ENCODE measurements at regions of chr10 and their contacts with region 1.

Region 1: DNA sequence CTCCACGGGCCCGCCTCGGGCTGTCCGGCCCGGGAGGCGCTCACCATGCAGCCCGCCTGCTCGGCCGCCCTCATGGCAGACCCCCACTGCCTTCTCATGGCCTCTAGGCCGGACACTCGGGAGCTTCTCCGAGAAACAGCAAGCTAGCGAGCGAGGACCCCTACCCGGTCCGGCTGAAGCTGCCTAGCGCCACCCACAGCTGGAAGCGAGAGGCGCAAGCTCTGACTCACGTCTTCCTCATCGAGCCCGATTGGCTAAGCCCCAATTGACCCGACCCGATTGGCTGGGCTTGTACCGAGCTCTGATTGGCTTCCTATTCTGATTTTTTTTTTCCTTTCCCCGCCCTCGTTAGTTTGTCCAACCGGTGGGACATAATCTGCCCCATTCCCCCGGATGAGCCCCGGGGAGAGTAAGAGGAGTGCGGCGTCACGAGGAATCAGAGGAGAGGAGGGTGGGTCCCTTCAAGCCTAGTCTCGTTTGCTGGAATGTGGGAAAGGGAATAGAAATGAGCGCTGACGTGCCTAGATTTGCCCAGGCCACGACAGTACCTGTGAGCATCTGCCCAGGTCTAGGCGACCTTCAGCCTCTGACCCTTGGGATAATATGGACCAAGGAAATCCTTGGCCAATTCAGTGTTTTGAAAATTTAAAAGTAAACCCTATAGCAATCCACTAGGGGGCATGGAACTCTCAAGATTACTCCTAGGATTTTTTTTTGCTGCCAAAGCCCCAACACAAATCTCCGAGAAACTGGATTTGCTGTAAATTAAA is at the start of gene TYSND1:
- H3K4me3 ChIP-seq: peak within 1 kb of the TSS; percentile 64
- H3K27ac ChIP-seq: peak within 1 kb of the TSS; percentile 84
- H3K4me1 ChIP-seq: peaks cover 6% of the 10 kb centered on the region; the same call in 1 of the 2 replicates
- CTCF ChIP-seq: peak; percentile 95

Region 2: GRCh38 chr10:68156373-68157185 is 1990.1 kb before region 1 on chr10:
- CTCF ChIA-PET with region 1: no interaction called
- POLR2A ChIA-PET with region 1: no interaction called
- H3K4me3 ChIP-seq: no peak overlapping the region
- H3K27ac ChIP-seq: no peak overlapping the region
- H3K4me1 ChIP-seq: 0 out of 2 replicates have a peak, but pooled peaks cover 11% of the 10 kb centered on the region
- CTCF ChIP-seq: peak; percentile 62

Region 3: GRCh38 chr10:69337296-69338132 is 809.2 kb before region 1 on chr10:
- CTCF ChIA-PET with region 1: no interaction called
- POLR2A ChIA-PET with region 1: no interaction called
- H3K4me3 ChIP-seq: no peak overlapping the region
- H3K27ac ChIP-seq: peak overlapping the region; percentile 8; the same call in 1 of the 2 replicates
- H3K4me1 ChIP-seq: peaks cover 6% of the 10 kb centered on the region
- CTCF ChIP-seq: no peak

Region 4: DNA sequence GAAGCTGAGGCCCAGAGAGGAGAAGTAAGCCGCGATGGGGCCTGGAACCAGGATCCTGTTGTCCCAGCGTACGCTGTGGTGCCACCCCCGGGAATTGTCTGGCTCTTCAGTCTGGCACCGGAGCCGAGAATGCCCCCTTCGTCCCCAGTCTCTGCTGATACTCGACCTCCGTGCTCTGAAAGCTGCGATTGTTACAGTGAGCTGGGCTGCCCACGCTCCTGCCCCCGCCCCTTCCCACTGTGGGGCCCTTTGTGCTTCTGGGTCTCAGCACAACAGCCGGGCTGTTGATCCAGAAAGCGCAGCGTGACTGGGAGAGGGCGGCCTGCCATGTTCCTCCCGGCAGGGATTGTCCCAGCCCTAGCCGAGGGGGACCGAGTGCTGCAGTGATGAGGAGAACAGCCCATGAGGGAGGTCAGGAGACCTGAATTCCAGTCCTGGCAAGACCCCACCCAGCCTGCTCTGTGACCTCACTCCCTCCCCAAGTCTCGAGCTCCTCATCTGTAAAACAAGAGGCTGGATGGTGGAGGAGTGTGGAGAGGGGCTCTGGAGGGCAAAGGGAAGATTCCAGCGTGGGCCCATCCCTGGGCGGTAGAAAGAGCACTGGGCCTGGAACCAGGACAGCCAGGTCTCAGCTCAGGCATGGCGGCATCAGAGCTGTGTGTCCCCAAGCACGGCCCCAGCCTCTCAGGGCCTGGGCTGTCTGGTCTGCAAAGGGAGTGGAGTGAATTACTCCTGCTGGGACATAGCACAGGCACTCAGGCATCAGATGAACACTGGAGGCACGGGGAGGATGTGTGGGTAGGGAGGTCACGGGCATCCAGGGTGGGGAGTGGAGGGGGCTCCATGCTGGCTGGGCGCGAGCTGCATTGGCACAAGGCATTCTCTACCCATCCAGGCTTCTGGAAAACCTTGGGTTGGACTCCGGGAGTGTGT is 651.8 kb before region 1 on chr10:
- CTCF ChIA-PET with region 1: no interaction called
- POLR2A ChIA-PET with region 1: no interaction called
- H3K4me3 ChIP-seq: no peak overlapping the region
- H3K27ac ChIP-seq: no peak overlapping the region
- H3K4me1 ChIP-seq: no peaks in the 10 kb centered on the region
- CTCF ChIP-seq: no peak

Region 5: GRCh38 chr10:70132098-70133029 is 14.3 kb before region 1 on chr10 and contains the start of gene AIFM2:
- CTCF ChIA-PET with region 1: interaction called, 16 read pairs
- POLR2A ChIA-PET with region 1: interaction called, 19 read pairs
- H3K4me3 ChIP-seq: peak within 1 kb of the TSS; percentile 55
- H3K27ac ChIP-seq: peak within 1 kb of the TSS; percentile 52; the same call in 1 of the 2 replicates
- H3K4me1 ChIP-seq: no peaks in the 10 kb centered on the region
- CTCF ChIP-seq: peak; percentile 46; the same call in 1 of the 2 replicates

Region 6: GRCh38 chr10:70169649-70170364 is 23.1 kb after region 1 on chr10:
- CTCF ChIA-PET with region 1: interaction called, 14 read pairs
- POLR2A ChIA-PET with region 1: interaction called, 81 read pairs
- H3K4me3 ChIP-seq: peak overlapping the region; percentile 87
- H3K27ac ChIP-seq: peak overlapping the region; percentile 16; the same call in 1 of the 2 replicates
- H3K4me1 ChIP-seq: 0 out of 2 replicates have a peak, but pooled peaks cover 4% of the 10 kb centered on the region
- CTCF ChIP-seq: no peak

Region 7: GRCh38 chr10:70233109-70233938 is 86.7 kb after region 1 on chr10 and contains the start of gene PPA1:
- CTCF ChIA-PET with region 1: interaction called, 3 read pairs
- POLR2A ChIA-PET with region 1: interaction called, 13 read pairs
- H3K4me3 ChIP-seq: peak within 1 kb of the TSS; percentile 87
- H3K27ac ChIP-seq: peak within 1 kb of the TSS; percentile 87
- H3K4me1 ChIP-seq: no peaks in the 10 kb centered on the region
- CTCF ChIP-seq: peak; percentile 14; the same call in 1 of the 2 replicates

Region 8: GRCh38 chr10:70440296-70441160 is 293.9 kb after region 1 on chr10:
- CTCF ChIA-PET with region 1: no interaction called
- POLR2A ChIA-PET with region 1: no interaction called
- H3K4me3 ChIP-seq: no peak overlapping the region
- H3K27ac ChIP-seq: no peak overlapping the region
- H3K4me1 ChIP-seq: no peaks in the 10 kb centered on the region
- CTCF ChIP-seq: no peak

Measured in HEK293 (cell line).